Activated T-helper 1 cell treated with anti-CD3 and anti-CD28 coated beads, Interleukin-12 subunit alpha, Interleukin-12 subunit beta, Interleukin-2, Interleukin-4 antibody, amounts not matched to agents 30 ng/mL and 10 ng/mL and 1 ng/mL, durations not matched to agents 14 hours and 24 hours and 36 hours (primary cell): ENCODE measurements at regions of chr20 and their contacts with region 1.

Region 1: DNA sequence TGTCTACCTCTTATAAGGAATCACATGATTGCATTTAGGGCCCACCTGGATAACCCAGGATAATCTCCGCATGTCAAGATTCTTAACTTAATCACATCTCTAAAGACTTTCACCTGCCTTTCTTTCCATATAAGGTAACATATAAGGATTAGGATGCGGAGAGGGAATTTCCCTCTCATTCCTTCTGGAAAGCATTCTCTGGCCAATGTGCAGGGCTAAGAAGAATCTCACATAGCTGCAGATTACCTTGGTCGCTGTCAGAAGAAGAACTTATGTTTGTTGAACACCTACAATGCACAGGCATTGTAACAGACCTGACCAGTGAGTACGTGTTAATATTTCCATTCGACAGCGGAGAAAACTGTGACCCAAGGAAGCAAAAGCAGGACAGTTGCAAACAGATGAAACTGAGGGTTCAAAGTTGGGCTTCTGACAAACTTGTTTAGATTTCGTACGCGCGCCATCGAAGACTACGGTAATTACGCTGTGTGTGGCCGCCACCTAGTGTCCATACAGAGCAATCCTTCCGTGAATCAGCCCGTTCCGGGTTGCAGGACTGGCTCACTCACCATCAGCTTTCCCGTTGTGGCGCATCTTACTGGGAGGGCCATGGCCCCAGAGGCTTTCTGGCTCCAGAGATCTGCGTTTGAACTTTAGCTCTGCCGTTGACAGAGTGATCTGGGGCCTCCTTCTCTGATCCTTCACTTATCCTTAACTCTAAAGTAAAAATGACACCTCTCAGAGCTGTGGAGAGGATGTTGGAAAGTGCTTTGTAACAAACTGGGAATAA is 9.5 kb downstream of the C20orf202 start:
- DNase-seq: peak; percentile 59
- H3K4me3 Mint-ChIP-seq: no peak overlapping the region
- H3K27ac Mint-ChIP-seq: no peak overlapping the region
- H3K4me1 Mint-ChIP-seq: peaks cover 38% of the 10 kb centered on the region
- H3K27me3 Mint-ChIP-seq: peaks cover 11% of the 10 kb centered on the region

Region 2: DNA sequence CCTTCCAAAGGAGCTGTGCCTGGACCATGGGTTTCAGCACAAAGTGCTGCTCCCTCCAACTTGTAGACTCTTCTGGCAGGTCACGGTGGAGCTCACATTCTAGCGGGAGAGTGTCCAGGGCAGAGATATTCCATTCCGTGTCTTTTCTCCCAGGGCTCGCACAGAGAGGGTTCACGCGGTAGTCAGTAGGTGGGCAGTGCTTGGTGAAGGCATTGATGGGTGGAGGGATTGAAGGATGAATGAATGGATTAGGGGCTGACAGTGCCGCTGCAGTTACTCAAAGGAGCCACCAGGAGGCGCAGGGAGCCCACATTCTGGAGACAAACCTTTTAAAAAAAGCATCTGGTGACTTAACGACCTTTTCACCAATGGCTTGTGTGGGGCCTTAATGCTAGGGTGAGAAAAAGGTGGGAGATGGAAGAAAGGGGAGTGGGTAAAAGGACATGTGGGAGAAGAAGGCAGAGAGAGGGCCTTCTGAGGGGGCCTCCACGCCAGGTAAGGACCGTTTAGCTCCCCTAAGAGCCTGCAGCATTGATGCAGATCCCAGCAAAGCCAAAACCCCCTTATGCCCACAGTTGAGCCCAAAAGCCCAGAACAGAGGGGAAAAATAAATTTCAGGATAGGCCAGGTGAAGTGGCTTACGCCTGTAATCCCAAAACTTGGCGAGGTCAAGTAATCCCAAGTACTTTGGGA is 396.7 kb before region 1 on chr20:
- intact Hi-C with region 1: loop called (anchors 1 kb)
- DNase-seq: peak; percentile 48
- H3K4me3 Mint-ChIP-seq: no peak overlapping the region
- H3K27ac Mint-ChIP-seq: no peak overlapping the region
- H3K4me1 Mint-ChIP-seq: peaks cover 15% of the 10 kb centered on the region
- H3K27me3 Mint-ChIP-seq: peaks cover 14% of the 10 kb centered on the region

Region 3: DNA sequence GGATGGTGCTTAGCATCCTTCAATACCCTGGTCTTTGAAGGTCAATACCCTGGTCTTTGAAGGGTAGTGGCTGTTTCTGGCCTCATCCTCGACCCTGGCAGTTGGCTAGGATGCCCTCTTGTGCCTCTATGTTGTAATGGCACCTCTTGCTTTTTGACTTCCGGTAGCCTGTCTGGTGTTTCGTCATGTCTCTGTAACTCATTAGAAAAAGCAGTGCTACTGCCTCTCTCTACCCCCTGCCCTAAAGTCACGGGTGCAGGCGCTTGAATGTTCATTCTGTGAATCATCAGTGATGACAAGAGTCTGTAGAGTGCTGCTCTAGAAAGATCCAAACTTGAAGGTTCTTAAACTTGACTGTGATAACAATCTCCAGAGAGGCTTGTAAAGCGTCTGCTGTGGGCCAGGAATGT is 239.0 kb before region 1 on chr20:
- intact Hi-C with region 1: loop called (anchors 1 kb)
- DNase-seq: peak; percentile 11
- H3K4me3 Mint-ChIP-seq: no peak overlapping the region
- H3K27ac Mint-ChIP-seq: no peak overlapping the region
- H3K4me1 Mint-ChIP-seq: no peaks in the 10 kb centered on the region
- H3K27me3 Mint-ChIP-seq: peaks cover 5% of the 10 kb centered on the region

Region 4: DNA sequence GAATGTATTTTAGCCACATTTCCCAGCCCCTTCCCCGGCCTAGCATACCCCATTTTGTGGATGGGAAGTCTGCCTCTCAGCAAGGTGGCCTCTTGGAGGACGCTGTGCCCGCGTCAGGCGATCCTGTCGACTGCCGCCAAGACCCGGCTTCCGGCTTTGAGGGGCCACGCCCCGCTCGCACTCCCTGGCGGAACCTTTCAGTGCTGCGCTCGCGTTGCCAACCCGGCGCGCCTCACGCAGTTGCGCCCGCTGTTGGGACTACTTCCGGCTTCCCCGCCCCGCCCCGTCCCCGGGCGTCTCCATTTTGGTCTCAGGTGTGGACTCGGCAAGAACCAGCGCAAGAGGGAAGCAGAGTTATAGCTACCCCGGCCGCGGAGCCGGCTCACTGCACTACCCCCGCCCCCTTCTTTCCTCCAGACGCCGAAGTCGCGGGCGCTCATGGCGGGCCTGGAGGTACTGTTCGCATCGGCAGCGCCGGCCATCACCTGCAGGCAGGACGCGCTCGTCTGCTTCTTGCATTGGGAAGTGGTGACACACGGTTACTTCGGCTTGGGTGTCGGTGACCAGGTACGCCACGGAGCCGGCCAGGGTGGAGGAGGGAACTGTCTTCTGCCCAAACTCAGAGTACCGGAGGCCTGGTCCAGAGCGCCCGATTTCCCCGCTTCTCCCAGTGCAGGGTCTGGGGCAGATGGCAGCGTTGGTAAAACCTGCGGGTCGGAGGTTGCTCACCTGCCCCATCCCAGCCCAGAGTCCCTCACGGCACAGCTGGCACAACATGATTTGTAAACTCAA is 94.3 kb before region 1 on chr20 and contains the start of gene PSMF1:
- intact Hi-C with region 1: loop called (anchors 1 kb)
- DNase-seq: peak; percentile 95
- H3K4me3 Mint-ChIP-seq: peak within 1 kb of the TSS; percentile 91
- H3K27ac Mint-ChIP-seq: peak within 1 kb of the TSS; percentile 81
- H3K4me1 Mint-ChIP-seq: peaks cover 56% of the 10 kb centered on the region
- H3K27me3 Mint-ChIP-seq: no peaks in the 10 kb centered on the region
- total RNA-seq, gene PSMF1: 185 and 189 TPM in 2 replicates

Region 5: GRCh38 chr20:1225783-1226654 is 13.2 kb after region 1 on chr20 and contains the start of gene RAD21L1:
- intact Hi-C with region 1: loop called (anchors 1 kb)
- DNase-seq: peak; percentile 57
- H3K4me3 Mint-ChIP-seq: peak within 1 kb of the TSS; percentile 84
- H3K27ac Mint-ChIP-seq: no peak within 1 kb of the TSS
- H3K4me1 Mint-ChIP-seq: peaks cover 7% of the 10 kb centered on the region
- H3K27me3 Mint-ChIP-seq: peaks cover 36% of the 10 kb centered on the region
- total RNA-seq, gene RAD21L1: not detected in 2 replicates